Cardiac septum (tissue), 1 donor: ENCODE measurements at regions of chr15 and their contacts with region 1.

Region 1: GRCh38 chr15:83011271-83012075 is at the start of gene C15orf40:
- DNase-seq: peak; percentile 95
- total RNA-seq, gene C15orf40: 8.5 TPM

Region 2: DNA sequence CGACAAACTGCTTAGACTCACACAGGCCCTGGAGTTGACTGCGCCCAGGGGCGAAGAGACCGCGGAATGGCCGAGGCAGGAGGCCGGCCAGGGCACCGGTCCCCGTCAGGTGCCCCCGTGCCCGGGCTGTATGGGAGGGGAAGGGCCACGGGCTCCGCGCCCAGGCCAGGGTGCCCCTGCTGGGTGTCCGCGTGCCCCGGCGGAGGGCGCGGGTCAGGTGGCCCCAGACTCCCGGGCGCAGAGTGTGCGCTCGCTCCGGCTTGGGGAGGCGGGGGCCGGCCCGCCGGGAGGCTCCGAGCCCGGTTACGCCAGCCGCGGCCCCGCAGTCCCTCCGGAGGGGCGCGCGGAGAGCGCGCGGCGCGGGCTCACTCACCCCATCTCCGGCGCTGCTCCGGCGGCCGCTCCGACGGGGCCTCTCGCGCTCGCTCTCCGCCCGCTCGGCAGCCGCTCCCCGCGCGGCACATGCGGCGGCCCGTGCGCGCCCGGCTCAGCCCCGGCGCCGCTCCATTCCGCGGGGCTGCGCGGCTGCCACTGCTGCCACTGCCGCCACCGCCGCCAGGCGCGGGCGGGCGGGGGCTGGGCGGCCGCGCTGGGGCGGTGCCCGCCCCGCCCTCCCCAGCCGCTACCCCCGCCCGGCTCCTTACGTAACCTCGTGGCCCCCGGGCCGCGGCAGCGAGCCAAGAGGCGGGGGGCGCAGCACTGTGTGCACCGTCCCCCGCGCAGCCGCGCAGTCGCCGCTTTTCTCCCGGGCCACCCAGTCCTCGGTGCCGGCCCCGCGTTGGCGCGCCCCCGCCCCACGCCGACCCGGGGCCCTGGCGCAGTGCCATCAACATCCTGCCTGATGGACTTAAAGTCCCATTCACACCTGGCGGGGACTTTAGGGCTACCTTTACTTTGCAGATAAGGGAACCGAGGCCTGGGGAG is 59.1 kb before region 1 on chr15 and contains the start of gene HOMER2:
- intact Hi-C with region 1: loop called (anchors 10 kb)
- DNase-seq: no peak
- total RNA-seq, gene HOMER2: 41.6 TPM

Region 3: DNA sequence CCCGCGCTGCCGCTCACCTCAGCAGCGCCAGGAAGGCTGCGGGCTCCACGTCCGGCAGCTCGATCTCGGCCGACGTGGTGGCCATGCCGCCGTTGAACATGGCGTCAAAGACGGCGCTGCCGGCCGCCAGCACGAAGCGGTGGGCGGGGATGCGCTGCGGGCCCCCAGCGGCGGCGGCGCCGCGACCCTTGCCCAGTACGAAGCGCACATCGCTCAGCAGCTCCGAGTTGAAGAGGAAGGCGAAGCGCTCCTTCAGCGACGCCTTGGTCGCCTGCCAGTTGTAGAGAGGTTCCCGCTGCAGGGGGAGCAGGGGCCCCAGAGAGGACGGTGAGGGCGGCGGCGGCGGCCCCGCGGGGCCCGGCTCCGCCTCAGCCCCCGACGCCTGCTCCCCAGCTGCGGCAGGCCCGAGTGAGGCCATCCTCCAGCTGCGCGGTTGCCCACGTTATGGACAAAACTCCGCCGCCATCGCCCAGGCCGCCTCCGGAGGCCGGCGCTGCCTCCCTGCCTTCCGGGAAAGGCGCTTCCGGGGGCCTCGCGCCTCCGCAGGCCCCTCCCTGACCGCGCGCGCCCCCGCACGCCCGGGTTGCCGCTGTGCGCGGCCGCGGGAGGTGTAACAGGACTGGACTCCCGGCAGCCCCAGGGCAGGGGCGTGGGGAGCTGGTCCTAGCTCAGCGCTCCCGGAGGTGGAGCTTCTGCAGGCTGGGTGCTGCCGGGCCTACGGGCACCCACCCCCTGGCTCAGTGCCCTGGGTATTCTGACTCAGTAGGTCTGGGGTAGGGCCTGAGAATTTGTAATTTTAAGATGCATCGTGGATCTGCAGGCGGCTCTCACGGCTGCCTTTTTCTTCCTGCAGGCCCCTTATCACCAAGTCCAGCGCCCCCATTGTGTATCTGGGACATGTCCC is 55.5 kb after region 1 on chr15 and contains the start of gene BTBD1:
- intact Hi-C with region 1: loop called (anchors 2 kb)
- DNase-seq: peak; percentile 96
- total RNA-seq, gene BTBD1: 128 TPM

Region 4: DNA sequence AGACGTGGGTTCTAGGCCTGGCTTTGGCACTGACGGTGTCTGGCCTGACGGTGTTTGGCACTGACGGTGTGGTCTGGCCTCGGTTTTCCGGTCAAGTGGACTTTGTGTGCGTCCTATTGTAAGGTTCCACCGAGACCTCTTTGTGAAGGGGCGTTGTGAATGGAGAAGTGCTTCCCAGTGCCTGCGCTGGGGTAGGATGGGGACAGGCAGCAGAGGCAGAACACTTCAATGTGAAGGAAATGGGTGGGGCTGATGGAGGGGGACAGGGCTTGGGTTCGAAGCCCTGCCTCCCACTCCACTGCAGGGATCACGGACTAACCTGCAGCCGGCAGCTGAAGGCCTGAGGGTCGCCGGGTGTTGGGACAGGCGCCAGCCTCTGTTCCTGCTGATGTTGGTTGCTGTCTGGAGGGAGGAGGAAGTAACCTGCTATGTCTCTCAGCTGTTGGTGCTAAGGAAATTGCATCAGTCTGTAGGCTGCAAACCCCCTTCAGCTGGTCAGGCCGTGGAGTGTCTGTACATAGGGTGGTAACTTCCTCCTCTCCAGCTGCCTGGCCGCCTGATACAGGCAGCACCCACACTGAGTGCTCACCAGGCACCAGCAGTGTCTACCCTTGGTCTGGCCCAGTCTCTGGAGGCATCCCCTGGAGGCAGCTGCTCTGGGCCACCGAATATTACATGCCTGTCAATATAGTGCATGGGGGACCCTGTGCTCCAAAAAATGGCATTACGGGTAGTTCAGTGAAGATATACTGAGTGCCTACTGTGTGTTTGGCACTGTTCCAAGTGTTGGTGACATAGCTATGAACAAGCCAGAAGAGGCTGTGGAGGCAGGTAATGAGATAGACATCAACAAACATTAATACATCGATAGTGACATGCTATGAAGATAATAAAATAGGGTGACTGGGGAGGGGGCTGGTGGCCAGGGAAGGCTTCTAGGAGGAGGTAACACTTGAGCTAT is 97.1 kb after region 1 on chr15:
- intact Hi-C with region 1: loop called (anchors 5 kb)
- DNase-seq: peak; percentile 88

Region 5: DNA sequence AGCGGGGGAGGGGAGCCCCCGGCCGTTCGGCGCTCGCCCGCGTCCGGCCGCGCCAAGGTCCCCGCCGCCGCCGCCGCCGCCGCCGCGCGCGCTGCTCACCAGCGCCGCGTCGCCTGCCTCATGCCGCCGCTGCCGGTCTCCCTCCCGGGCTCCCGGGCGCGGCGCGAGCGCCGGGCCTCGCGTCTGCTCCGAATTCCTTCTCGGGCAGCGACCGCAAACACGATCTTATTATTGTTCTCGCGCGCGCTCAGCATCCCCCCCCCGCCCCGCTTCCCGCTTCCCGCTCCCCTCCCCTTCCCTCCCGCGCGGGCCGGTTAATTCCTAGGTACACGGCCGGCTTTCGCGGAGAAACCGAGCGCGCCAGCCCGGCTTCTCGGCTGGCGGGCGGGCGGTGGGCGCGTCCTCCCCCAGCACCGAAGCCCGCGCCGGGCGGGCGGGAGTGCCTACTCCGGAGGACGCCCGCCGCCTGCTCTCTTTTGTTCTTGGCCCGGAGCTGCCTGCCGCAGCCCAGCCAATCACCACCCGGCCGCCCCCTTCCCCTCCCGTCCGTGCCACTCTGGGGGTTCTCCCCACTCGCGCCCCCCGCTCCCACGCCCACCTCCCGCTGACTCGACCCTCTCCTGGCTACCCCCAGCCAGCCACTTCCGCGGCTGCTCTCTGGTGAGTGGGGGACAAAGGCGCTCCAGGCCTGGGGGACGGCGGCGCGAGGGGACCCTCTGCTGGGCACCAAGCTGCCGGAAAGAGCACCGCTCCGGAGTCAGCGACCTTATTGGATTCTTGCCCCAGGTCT is 196.3 kb after region 1 on chr15 and contains the start of gene HDGFL3:
- intact Hi-C with region 1: loop called (anchors 1 kb)
- DNase-seq: peak; percentile 83
- total RNA-seq, gene HDGFL3: 50.5 TPM